ENCODE measurements at regions of chr12 and their contacts with region 1.

Region 1: DNA sequence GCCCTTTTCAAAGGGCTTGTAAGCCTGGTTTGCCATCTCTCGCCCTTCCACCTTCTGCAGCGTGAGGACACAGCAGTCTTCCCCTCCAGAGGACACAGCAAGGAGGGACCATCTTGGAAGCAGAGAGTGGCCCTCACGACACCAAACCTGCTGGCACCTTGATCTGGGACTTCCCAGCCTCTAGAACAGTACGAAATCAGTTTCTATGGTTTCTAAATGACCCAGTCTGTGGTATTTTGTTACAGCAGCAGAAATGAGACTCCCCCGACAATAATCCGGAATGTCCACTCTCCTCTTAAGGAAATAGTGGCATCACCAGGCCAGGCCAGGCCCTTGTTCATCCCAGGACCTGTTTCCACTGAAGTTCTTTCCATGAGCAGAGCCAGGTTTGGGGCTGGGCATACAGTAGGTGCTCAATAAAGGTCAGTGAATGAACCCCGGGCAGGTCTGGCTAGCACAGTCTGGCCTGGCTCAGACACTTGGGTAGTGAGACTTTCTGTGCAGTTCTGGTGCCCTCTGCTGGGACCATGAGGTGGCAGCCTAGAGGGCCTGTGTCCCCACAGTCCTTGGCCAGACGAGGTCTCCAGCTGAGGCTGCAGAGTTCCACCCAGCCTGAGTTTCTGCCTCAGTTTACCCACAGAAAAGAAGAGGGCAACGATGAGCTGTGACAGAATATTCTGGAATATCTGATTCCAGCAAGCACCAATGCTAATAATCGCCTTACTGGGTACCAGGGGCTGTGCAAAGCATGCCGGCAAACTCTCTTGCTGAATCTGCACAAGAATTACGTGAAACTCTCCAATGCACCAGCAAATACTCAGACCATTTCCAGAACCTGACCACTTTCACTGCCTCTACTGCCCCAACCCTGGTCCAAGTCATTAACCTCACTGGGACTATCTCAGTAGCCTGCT is 14.0 kb downstream of the ABCB9 start:
- DNase-seq: peak in 1 of 2 experiments; percentile 67
- H3K4me3 ChIP-seq: no peak overlapping the region
- H3K27ac ChIP-seq: no peak overlapping the region
- H3K4me1 ChIP-seq: peaks cover 19% of the 10 kb centered on the region
- H3K27me3 ChIP-seq: no peaks in the 10 kb centered on the region
- CTCF ChIP-seq: peak; percentile 86

Region 2: DNA sequence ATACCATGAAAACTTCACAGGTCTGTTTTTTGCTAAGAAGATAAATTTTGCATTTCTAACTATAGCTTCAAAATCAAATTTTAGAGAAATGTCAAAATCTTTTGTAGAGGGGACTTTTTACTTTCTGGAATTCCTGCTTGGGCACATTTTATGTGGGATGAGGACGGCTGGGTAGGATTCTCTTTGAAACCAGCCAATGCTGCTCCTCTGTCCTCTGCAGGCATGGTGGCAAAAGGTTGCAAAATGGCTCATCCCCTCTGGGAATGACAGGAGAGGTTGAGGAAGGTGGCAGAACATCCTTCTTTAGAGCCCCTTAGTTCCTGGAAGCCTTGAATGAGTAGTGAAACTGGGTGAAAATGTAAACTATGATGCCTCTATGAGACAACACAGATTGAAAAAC is 184.5 kb before region 1 on chr12:
- CTCF ChIA-PET with region 1: no interaction called
- POLR2A ChIA-PET with region 1: no interaction called
- intact Hi-C with region 1: loop called (anchors 5 kb)
- DNase-seq: no peak
- H3K4me3 ChIP-seq: no peak overlapping the region
- H3K27ac ChIP-seq: no peak overlapping the region
- H3K4me1 ChIP-seq: no peaks in the 10 kb centered on the region
- H3K27me3 ChIP-seq: no peaks in the 10 kb centered on the region
- CTCF ChIP-seq: no peak

Region 3: DNA sequence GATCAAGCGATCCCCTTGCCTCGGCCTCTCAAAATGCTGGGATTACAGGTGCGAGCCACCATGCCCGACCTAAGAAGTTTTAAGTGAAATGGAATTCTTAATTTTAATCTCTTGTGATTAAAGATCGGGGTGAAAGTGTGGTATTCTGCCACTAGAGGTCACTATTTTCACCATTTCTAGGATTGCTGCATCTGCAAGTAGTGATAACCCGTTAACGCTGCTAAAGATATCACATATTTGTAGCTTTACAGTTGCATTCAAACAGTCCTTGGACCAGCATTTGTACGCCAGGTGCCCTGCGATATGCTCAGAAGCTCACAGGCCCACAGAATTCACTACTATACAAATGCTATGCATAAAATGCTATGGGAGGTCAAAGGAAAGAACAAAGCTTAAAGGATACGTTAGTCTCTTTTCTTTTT is 158.5 kb before region 1 on chr12:
- CTCF ChIA-PET with region 1: no interaction called
- POLR2A ChIA-PET with region 1: no interaction called
- intact Hi-C with region 1: loop called (anchors 1 kb)
- DNase-seq: peak in 1 of 2 experiments; percentile 6
- H3K4me3 ChIP-seq: no peak overlapping the region
- H3K27ac ChIP-seq: no peak overlapping the region
- H3K4me1 ChIP-seq: no peaks in the 10 kb centered on the region
- H3K27me3 ChIP-seq: no peaks in the 10 kb centered on the region
- CTCF ChIP-seq: peak; percentile 86

Region 4: DNA sequence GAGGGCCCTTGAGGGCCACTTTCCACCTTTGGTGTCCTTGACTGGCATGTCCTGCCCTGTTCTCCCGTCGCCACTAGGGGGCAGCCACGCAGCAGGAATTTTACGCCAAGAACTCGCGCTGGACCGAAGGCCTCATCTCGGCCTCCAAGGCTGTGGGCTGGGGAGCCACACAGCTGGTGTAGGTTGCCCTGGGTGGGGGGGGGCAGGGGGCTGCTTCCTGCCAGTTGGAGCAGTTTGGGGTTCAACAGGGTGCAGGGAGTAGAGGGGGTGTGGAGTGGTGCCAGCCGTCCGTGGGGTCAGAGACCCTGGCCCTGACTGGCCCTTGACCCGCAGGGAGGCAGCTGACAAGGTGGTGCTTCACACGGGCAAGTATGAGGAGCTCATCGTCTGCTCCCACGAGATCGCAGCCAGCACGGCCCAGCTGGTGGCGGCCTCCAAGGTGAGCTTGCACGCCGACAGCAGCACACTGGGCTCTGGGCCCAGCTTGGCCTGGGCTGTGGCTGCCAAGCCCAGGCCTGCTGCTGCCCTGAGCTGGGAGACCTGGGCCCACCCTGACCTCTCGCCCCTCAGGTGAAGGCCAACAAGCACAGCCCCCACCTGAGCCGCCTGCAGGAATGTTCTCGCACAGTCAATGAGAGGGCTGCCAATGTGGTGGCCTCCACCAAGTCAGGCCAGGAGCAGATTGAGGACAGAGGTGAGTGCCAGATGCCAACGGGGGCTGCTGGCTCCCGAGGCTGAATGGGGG is 91.7 kb before region 1 on chr12:
- CTCF ChIA-PET with region 1: interaction called, 11 read pairs
- POLR2A ChIA-PET with region 1: interaction called, 4 read pairs
- intact Hi-C with region 1: loop called (anchors 1 kb)
- DNase-seq: peak in 1 of 2 experiments; percentile 77
- H3K4me3 ChIP-seq: no peak overlapping the region
- H3K27ac ChIP-seq: no peak overlapping the region
- H3K4me1 ChIP-seq: no peaks in the 10 kb centered on the region
- H3K27me3 ChIP-seq: no peaks in the 10 kb centered on the region
- CTCF ChIP-seq: peak; percentile 93

Measured in PC-9 (cell line).